Mammary epithelial cell (primary cell): ENCODE measurements at regions of chr20 and their contacts with region 1.

Region 1: DNA sequence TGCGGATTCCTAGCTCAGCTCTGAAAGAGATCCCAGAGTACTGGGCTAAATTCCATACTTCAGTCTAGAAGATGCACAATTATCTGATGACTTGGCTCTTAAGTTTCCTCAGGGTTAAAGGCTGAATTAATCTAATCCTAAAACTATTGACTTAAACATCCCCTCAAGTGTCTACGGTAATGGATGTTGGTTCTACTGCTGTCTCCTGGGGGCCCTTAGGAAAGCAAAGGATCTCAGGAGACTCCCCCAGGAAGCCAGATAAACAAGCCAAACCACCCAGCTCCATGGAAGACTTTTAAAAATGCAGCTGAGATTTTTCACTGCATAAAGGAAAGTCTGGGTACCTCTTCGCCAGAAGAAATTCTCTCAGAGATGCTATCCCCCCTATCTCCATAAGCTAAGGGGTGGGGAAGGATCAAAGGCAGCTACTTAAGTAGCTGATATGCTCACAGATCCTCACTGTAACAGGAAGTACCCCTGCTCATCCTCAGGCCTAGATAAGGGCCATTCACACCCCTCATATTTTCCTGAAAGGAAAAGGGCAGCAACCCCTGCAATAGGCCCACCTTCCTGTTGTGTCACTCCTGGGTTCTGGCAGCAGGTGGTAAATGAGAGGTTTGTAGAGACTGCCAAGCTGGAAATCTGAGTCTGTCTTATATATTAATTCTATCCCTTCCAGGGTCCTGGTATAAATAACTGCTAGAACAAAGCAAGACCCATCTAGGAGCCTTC is 9.3 kb downstream of the NDRG3 start:
- DNase-seq: no peak
- H3K4me3 ChIP-seq: no peak overlapping the region
- H3K27ac ChIP-seq: no peak overlapping the region
- H3K4me1 ChIP-seq: peaks cover 7% of the 10 kb centered on the region
- H3K27me3 ChIP-seq: no peaks in the 10 kb centered on the region
- CTCF ChIP-seq: no peak

Region 2: GRCh38 chr20:36591854-36592641 is 144.6 kb before region 1 on chr20:
- CTCF ChIA-PET with region 1: interaction called, 15 read pairs
- dilution Hi-C with region 1: no loop called
- in situ Hi-C with region 1: no loop called
- intact Hi-C with region 1: no loop called
- DNase-seq: peak; percentile 9
- H3K4me3 ChIP-seq: no peak overlapping the region
- H3K27ac ChIP-seq: no peak overlapping the region
- H3K4me1 ChIP-seq: no peaks in the 10 kb centered on the region
- H3K27me3 ChIP-seq: no peaks in the 10 kb centered on the region
- CTCF ChIP-seq: peak in 1 of 2 donors; percentile 43

Region 3: GRCh38 chr20:36773597-36774390 is 37.2 kb after region 1 on chr20 and contains the start of gene DSN1:
- CTCF ChIA-PET with region 1: no interaction called
- dilution Hi-C with region 1: no loop called
- in situ Hi-C with region 1: no loop called
- intact Hi-C with region 1: no loop called
- DNase-seq: peak; percentile 97
- H3K4me3 ChIP-seq: peak within 1 kb of the TSS; percentile 77 to 84 (median 77)
- H3K27ac ChIP-seq: peak within 1 kb of the TSS; percentile 95
- H3K4me1 ChIP-seq: peaks cover 12% of the 10 kb centered on the region
- H3K27me3 ChIP-seq: no peaks in the 10 kb centered on the region
- CTCF ChIP-seq: peak in 1 of 2 donors; percentile 43
- total RNA-seq, gene DSN1: 6.7 to 12.8 TPM